Activated T-helper 2 cell treated with anti-CD3 and anti-CD28 coated beads, Interferon-gamma antibody, Interleukin-2, Interleukin-4, amounts not matched to agents 10 μg/mL and 5 μg/mL and 100 μg/mL, durations not matched to agents 14 hours and 24 hours and 36 hours (primary cell): ENCODE measurements at regions of chr10 and their contacts with region 1.

Region 1: GRCh38 chr10:11757821-11758463 is 15.8 kb downstream of the ECHDC3 start:
- DNase-seq: peak; percentile 70
- H3K4me3 Mint-ChIP-seq: no peak overlapping the region
- H3K27ac Mint-ChIP-seq: no peak overlapping the region
- H3K4me1 Mint-ChIP-seq: peaks cover 1% of the 10 kb centered on the region
- H3K27me3 Mint-ChIP-seq: peaks cover 7% of the 10 kb centered on the region

Region 2: GRCh38 chr10:11225935-11226334 is 532.0 kb before region 1 on chr10:
- intact Hi-C with region 1: no loop called
- DNase-seq: peak; percentile 50
- H3K4me3 Mint-ChIP-seq: peak overlapping the region; percentile 4
- H3K27ac Mint-ChIP-seq: peak overlapping the region; percentile 90
- H3K4me1 Mint-ChIP-seq: peaks cover 83% of the 10 kb centered on the region
- H3K27me3 Mint-ChIP-seq: no peaks in the 10 kb centered on the region

Region 3: DNA sequence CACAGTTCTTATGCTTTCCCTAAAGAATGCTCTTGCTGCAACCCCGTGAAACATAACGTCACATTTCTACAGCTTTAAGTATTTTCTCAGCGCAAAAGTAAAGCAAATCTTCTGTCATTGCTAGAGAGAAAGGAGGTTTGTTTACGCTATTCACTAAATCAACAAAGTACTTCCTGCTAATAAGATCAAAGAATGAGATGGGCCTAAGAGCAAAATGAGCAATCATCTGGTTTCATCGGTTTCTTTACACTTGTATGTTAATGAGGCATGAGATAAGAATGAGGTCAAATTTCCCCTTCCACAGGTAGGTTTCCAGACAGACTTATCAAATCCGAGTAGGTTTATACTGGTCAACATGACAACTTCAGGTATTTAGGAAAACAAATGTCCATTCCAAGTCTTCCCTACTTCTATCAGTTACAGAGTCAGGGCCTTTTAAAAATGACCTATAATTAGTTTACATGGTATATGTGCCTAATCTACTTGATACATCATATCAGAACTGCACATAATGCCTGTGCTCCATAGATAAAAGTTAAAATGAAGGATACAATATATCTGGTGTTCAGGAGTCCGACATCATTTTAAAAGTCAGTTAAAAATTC is 154.9 kb before region 1 on chr10:
- intact Hi-C with region 1: loop called (anchors 10 kb)
- DNase-seq: no peak
- H3K4me3 Mint-ChIP-seq: no peak overlapping the region
- H3K27ac Mint-ChIP-seq: no peak overlapping the region
- H3K4me1 Mint-ChIP-seq: peaks cover 5% of the 10 kb centered on the region
- H3K27me3 Mint-ChIP-seq: peaks cover 36% of the 10 kb centered on the region